WTC11 (cell line): ENCODE measurements at regions of chr9 and their contacts with region 1.

Region 1: GRCh38 chr9:14846871-14847311 is 63.3 kb downstream of the FREM1 start:
- DNase-seq: peak; percentile 90
- ATAC-seq: peak; percentile 100
- H3K4me3 Mint-ChIP-seq: no peak overlapping the region
- H3K27ac Mint-ChIP-seq: no peak overlapping the region
- H3K4me1 Mint-ChIP-seq: 0 out of 2 replicates have a peak, but pooled peaks cover 3% of the 10 kb centered on the region
- H3K27me3 Mint-ChIP-seq: no peaks in the 10 kb centered on the region
- CTCF ChIP-seq: peak; percentile 77

Region 2: DNA sequence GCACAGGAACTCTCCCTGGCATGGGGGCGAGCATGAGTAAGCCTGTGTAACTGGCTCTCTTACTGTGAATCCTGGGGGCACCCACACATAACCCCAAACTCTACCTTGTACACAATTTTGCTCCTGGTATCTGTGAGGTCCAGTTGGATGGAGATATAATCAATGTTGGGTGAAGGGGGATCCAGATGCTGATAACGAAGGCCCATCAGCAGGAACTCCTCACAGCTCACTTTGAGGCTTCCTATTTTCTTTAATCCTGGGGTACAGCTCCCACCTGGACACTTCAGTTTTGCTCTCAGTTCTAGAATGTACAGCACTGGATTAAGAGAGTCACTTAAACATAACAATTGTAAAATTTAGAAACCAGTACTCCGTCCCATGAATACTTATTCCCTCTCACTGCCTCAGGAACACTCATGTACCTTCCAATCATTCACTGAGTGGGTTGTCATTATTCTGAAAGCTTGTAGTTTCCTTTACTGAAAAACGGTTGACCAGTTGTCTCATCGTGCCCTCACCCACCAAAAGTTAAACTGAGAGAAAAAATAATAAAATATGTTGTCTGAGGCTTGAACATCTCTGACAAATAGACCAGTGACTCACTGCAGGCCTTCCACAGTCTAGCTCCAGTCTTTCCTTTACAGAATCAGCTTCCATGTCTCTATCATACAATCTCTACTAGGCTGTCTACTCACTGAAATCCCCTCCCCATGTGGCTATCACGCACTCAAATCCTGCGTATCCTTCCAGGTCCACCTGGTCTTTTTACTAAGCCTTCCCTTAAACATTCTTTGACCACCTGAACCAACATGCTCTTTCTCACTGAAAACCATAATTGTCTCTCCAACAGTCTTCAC is 10.8 kb after region 1 on chr9:
- CTCF ChIA-PET with region 1: interaction called, 10 read pairs
- POLR2A ChIA-PET with region 1: no interaction called
- DNase-seq: no peak
- ATAC-seq: no peak
- H3K4me3 Mint-ChIP-seq: no peak overlapping the region
- H3K27ac Mint-ChIP-seq: no peak overlapping the region
- H3K4me1 Mint-ChIP-seq: no peaks in the 10 kb centered on the region
- H3K27me3 Mint-ChIP-seq: no peaks in the 10 kb centered on the region
- CTCF ChIP-seq: no peak

Region 3: GRCh38 chr9:14935106-14935751 is 88.3 kb after region 1 on chr9:
- CTCF ChIA-PET with region 1: interaction called, 11 read pairs
- POLR2A ChIA-PET with region 1: no interaction called
- DNase-seq: no peak
- ATAC-seq: no peak
- H3K4me3 Mint-ChIP-seq: no peak overlapping the region
- H3K27ac Mint-ChIP-seq: no peak overlapping the region
- H3K4me1 Mint-ChIP-seq: peaks cover 26% of the 10 kb centered on the region
- H3K27me3 Mint-ChIP-seq: no peaks in the 10 kb centered on the region
- CTCF ChIP-seq: no peak